Right cardiac atrium (tissue), 5 donors: ENCODE measurements at regions of chrX and their contacts with region 1.

Region 1: DNA sequence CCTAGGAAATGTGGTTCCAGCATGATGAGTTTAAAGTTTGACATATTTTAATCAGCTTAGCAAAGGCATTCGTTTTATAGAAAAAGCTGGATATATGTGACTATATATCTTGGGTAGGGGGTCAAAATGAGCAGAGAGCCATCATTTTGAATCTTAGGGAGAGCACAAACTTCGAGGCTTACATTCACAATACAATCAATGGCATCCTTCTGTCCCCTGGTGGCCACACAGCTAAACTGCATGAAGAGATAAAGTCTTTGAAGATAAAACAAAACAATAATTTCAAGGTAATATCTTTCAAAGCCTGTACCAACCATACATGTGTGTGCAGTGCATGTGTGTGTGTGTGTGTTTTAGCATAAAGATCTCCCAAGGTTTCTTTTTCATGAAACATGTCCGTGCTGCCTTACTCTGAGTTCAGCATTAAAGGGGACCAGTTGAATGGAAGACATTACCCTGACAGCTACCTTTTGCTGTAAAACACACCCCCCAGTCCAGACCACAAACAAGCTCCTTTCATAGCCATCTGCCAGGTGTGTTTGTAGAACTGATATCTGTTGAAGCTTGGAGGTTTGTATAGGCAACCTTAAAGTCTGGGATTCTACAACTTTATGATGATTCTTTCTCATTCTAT is 22.0 kb downstream of the DYNLT3 start:
- DNase-seq: peak in 2 of 3 donors; percentile 25 to 34
- ATAC-seq: peak in 1 of 2 donors; percentile 51
- H3K4me3 ChIP-seq: no peak overlapping the region
- H3K27ac ChIP-seq: no peak overlapping the region
- H3K4me1 ChIP-seq: no peaks in the 10 kb centered on the region
- H3K27me3 ChIP-seq: no peaks in the 10 kb centered on the region

Region 2: DNA sequence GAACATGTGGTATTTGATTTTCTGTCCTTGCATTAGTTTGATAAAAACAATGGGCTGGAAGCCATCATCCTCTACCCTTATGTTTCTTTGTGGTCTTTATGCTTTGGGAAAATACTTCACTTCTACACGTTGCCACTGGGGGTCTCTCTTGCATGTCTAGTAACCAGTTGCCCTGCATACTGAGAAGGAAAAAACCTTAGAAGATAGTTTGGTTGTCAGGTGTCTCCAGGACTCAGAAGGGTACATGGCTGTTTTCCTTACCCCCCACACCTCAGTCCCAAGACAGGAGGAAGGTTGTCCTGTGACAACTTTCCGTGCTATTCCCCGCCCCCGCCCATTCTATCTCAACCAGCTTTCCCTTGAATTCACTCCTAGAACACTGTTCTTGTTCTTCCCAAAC is 316.0 kb before region 1 on chrX:
- intact Hi-C with region 1: loop called in 1 of 4 experiments (anchors 5 kb)
- DNase-seq: no peak
- ATAC-seq: no peak
- H3K4me3 ChIP-seq: no peak overlapping the region
- H3K27ac ChIP-seq: no peak overlapping the region
- H3K4me1 ChIP-seq: no peaks in the 10 kb centered on the region
- H3K27me3 ChIP-seq: no peaks in the 10 kb centered on the region

Region 3: DNA sequence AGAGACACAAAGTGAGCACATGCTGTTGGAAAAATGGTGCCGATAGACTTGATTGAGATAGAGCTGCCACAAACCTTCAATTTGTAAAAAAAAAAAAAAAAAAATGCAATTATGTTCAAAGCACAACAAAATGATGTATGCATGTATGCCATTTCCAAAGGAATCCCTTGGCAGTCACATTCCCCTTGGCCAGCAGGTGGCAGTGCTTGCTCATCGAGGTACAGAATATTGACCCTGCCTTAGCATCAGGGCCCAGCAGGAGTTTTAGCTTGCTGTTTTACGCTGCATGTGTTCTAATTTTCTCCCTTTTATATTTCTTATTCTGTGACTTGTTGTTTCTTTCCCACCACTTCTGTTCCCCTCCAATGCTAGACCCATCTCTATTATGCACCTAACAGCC is 80.0 kb before region 1 on chrX:
- intact Hi-C with region 1: loop called in 3 of 4 experiments (anchors 5 to 10 kb)
- DNase-seq: peak; percentile 62 to 88 (median 84)
- ATAC-seq: peak; percentile 56 to 74
- H3K4me3 ChIP-seq: no peak overlapping the region
- H3K27ac ChIP-seq: no peak overlapping the region
- H3K4me1 ChIP-seq: no peaks in the 10 kb centered on the region
- H3K27me3 ChIP-seq: no peaks in the 10 kb centered on the region